ENCODE measurements at regions of chr12 and their contacts with region 1.

Region 1: DNA sequence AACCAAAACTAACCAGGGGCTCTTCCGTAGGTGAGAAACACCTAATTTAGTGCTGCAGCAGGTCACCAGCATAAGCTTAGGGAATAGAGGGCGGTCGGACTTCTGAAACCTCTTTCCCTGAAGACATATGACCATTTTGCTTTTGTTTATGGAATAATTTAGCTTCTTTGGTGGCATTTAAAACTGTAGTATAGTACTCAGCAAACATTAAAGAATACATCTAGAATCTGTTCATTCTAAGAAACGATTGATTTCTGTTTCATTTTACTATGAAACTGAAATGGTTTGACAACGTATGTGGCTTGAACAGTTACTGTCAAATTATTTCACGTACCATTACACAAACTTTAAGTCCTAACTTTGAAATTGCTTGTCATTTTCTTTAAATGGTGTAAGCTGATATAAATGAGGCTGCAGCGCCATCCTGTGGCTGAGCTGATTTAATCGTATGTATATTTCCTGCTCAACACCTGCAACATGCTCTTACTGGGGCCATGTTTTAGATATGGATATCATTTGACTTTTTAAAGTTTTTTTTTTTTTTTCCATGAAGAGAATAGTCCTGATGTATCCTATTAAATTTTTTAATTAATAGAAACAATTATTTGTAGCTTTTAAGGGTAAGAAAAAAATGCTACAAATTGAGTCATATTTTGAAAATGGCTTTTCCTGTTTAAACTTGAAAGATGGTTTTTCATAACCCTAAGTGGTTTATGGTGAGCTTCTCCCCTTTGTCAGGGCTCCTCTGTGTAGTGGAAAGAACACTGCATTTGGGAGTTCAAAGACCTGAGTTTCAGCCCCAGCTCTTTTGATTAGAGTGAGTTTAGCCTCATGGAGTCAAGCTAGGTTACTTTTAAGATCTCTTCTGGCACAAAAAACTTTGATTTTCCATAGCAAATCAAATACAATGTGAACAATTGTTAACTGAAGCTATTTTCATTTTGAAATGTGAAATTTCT is 27.4 kb downstream of the CFAP54 start:
- DNase-seq: peak; percentile 57 to 78 (median 70)
- ATAC-seq: peak in 3 of 4 donors; percentile 63 to 85 (median 79)
- H3K4me3 ChIP-seq: peak overlapping the region in 1 of 12 donors; percentile 2
- H3K27ac ChIP-seq: no peak overlapping the region
- H3K4me1 ChIP-seq: peaks cover 0 to 6% (median 0%) of the 10 kb centered on the region in 12 donors
- H3K27me3 ChIP-seq: no peaks in the 10 kb centered on the region
- CTCF ChIP-seq: peak; percentile 45 to 81 (median 65)
- POLR2A ChIP-seq: no peak

Region 2: DNA sequence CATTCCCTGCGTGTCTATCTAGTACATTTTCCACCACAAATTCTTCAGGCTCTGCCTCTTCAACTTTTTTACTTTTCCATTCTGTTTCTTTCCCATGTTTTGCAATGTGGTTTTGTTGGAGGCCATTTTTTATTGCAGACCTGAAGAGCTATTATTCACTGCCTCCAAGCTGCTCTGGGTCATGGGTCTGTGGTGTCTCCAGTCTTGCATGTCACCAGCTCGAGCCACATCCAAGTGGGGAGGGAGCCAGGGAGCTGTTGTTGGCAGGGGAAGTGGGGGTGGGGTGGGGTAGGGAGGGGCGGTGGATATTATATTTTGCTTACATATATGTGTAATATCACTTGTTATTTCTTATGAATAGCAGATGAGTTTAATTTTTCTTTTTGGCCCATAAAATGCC is 1230.0 kb before region 1 on chr12:
- intact Hi-C with region 1: no loop called
- DNase-seq: peak in 2 of 5 donors; percentile 30 to 36
- ATAC-seq: peak; percentile 67 to 74 (median 72)
- H3K4me3 ChIP-seq: no peak overlapping the region
- H3K27ac ChIP-seq: no peak overlapping the region
- H3K4me1 ChIP-seq: peaks cover 0 to 5% (median 0%) of the 10 kb centered on the region in 12 donors
- H3K27me3 ChIP-seq: no peaks in the 10 kb centered on the region
- CTCF ChIP-seq: no peak
- POLR2A ChIP-seq: no peak

Region 3: DNA sequence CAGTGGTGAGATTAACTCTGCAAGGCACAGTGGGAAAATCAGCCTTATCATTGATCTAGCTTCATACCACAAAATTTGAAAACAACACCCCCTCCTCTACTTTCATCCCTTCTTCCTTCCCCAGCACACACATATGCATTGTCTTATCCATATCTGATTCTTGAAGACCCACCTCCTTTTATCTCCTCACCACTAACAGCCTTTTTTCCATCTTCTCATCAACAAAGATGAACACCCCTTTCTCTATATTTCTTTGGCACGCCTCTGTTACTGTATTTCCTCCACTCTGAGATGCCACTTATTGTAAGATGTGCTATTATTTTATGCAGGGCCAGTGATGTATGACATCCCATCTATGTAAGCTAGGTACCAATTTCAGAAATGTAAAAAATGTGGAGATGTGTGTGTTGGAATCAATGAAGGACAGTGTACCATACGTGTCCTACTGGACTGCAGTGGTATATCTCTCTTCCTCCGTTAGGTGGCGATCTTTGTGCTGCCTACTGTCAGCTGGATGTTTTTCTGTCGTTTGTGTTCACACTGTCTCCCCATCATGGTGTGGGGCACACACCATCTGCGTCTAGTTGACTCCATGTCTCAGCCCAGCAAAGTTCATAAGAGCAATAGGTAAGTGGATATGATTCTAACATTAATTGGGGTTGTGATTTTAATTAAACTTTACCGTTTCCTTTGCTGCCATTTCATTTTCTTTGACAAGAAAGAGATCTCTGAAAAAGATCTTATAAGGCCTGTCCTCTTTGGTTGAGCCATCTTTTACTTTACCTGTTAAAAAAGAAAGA is 598.4 kb before region 1 on chr12:
- intact Hi-C with region 1: loop called in 1 of 10 experiments (anchors 5 kb)
- DNase-seq: peak in 2 of 5 donors; percentile 15 to 27
- ATAC-seq: peak in 3 of 4 donors; percentile 74 to 83 (median 82)
- H3K4me3 ChIP-seq: no peak overlapping the region
- H3K27ac ChIP-seq: no peak overlapping the region
- H3K4me1 ChIP-seq: no peaks in the 10 kb centered on the region
- H3K27me3 ChIP-seq: no peaks in the 10 kb centered on the region
- CTCF ChIP-seq: peak; percentile 60 to 83 (median 74)
- POLR2A ChIP-seq: no peak

Region 4: DNA sequence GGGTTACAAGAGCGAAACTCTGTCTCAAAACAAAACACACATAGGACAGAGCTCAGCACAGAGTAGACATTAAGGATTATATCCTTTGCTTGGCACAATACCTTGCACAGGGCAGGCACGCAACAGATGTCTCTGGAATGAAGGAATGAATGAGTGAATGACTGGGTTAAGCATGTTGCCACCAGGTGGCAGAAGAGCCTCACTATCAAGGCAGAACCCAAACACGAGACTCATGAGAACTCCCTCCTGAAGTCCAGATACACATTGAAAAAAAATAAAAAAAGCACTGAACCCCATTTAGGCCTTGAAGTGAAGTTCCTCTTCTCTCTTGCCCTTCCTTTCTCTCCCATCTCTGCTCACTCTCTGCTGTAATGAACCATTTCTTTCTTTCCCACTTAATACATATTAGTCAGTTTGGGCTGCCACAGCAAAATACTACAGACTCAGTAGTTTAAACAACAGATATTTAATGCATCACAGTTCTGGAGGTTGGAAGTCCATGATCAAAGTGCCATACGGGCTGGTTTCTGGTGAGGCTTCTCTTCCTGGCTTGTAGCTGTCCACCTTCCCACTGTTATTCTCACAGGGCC is 454.8 kb before region 1 on chr12:
- intact Hi-C with region 1: loop called (anchors 1 to 5 kb)
- DNase-seq: peak; percentile 61 to 74 (median 71)
- ATAC-seq: peak; percentile 55 to 92 (median 86)
- H3K4me3 ChIP-seq: no peak overlapping the region
- H3K27ac ChIP-seq: peak overlapping the region in 2 of 12 donors; percentile 7 to 39
- H3K4me1 ChIP-seq: peaks cover 0 to 27% (median 3%) of the 10 kb centered on the region in 12 donors
- H3K27me3 ChIP-seq: no peaks in the 10 kb centered on the region
- CTCF ChIP-seq: peak; percentile 73 to 93 (median 82)
- POLR2A ChIP-seq: no peak

Region 5: DNA sequence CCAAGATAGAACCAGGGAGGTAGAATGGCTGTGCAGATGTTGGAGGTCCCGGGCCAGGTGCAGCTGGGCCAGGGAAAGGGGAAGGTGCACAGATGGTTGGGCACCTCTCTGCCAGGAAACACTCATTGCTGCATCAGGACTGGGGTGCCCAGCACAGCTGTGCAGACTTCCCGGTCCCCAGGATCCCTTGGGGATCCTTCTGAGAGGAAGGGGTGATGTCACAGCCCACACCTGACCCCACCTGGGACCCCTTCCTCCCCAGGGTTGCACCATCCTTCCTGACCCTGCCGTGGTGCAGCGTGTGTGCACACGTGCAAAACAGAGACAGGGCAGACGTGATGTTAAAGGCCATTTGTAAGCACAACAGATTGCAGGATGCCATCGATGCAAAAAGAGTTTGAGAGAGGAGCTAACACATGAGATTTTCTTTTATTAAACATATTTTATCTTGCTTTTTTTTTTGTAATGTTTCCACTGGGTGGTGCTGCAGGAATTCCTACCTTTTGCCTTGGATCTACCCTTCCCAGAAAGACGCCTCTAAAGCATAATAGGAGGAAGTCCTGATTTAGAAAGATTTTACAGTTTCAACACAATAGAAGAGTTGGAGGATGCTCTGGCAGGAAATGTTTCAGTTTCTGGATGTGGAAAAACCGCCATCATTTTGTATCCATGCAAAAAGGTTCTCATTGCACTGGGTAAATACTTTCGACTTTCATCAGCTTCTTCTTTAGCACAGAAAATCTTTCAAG is 307.8 kb before region 1 on chr12:
- intact Hi-C with region 1: loop called in 6 of 10 experiments (anchors 5 to 10 kb)
- DNase-seq: no peak
- ATAC-seq: peak; percentile 44 to 81 (median 63)
- H3K4me3 ChIP-seq: peak overlapping the region in 2 of 12 donors; percentile 11 to 14
- H3K27ac ChIP-seq: peak overlapping the region in 10 of 12 donors; percentile 16 to 81 (median 72)
- H3K4me1 ChIP-seq: peaks cover 0 to 96% (median 63%) of the 10 kb centered on the region in 12 donors
- H3K27me3 ChIP-seq: no peaks in the 10 kb centered on the region
- CTCF ChIP-seq: peak in 9 of 12 donors; percentile 10 to 45 (median 36)
- POLR2A ChIP-seq: no peak

Region 6: GRCh38 chr12:96219698-96220206 is 297.0 kb before region 1 on chr12:
- intact Hi-C with region 1: loop called in 6 of 10 experiments (anchors 5 to 10 kb)
- DNase-seq: no peak
- ATAC-seq: peak in 2 of 4 donors; percentile 26 to 37
- H3K4me3 ChIP-seq: no peak overlapping the region
- H3K27ac ChIP-seq: peak overlapping the region in 6 of 12 donors; percentile 18 to 47 (median 34)
- H3K4me1 ChIP-seq: peaks cover 0 to 87% (median 54%) of the 10 kb centered on the region in 12 donors
- H3K27me3 ChIP-seq: no peaks in the 10 kb centered on the region
- CTCF ChIP-seq: no peak
- POLR2A ChIP-seq: no peak